GM12878 (cell line): ENCODE measurements at regions of chr11 and their contacts with region 1.

Region 1: DNA sequence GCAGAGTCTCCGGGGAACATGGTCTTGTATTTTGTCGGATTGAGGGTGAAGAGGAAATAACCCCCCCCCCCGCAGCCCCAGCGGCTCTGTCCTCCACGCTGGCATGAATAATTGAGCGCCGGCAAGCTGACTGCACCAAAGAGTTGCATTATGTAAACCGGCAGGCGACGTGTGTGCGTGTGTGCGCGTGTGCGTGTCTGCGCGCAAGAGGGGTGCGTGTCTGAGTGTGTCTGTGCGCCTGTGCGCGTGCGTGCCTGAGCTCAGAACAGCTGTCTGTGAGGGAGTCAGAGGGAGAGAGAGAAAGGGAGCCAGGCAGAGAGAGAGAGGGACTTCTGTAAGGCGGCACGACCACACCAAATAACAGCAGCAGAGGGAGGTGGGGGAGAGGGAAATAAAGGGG is 94.4 kb downstream of the SCN3B start:
- DNase-seq: no peak
- ATAC-seq: peak; percentile 73
- H3K4me3 ChIP-seq: peak overlapping the region; percentile 15; the same call in 1 of the 2 replicates
- H3K27ac ChIP-seq: no peak overlapping the region
- H3K4me1 ChIP-seq: peaks cover 14% of the 10 kb centered on the region
- H3K27me3 ChIP-seq: no peaks in the 10 kb centered on the region
- CTCF ChIP-seq: no peak
- EP300 ChIP-seq: no peak
- POLR2A ChIP-seq: peak; percentile 44; the same call in 1 of the 2 replicates
- RAD21 ChIP-seq: no peak

Region 2: DNA sequence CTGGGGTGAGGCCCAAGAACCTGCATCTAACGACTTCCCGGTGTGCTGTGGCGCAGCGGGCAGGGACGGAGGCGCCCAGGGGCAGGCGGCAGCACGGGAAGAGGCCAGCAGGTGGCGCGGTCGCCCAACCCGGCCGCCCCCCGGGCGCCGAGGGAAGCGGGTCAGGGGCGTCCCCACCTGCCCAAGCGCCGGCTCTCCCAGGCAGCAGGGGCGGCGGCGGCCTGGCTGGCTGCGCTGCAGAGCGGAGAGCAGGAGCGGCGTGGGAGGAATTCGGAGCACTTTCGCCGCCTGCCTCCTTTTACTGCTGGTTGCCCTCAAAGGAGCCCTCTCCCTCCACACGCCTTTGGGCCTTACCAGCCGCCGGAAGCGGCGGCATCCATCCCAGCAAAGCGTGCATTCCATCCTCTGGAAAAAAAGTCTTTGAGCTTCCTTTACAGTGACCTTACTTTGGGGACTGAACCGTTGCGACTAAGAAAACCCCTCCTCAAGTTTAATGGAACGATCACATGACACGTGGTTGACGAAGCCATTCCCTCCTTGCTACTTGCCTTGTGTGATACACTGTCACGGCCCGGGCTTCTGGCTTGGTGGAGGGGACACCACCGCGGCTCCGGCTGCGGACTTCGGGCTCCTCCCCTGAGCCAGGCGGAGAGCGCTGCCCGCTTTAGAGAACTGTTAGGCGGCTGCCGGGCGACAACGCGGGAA is 258.2 kb before region 1 on chr11:
- CTCF ChIA-PET with region 1: interaction called, 3 read pairs
- POLR2A ChIA-PET with region 1: no interaction called
- RAD21 ChIA-PET with region 1: no interaction called
- SMC1A ChIA-PET with region 1: interaction called, 3 read pairs
- in situ Hi-C with region 1: no loop called
- intact Hi-C with region 1: loop called (anchors 5 kb)
- DNase-seq: peak; percentile 32
- ATAC-seq: peak; percentile 83
- H3K4me3 ChIP-seq: peak overlapping the region; percentile 62; the same call in 1 of the 2 replicates
- H3K27ac ChIP-seq: peak overlapping the region; percentile 75
- H3K4me1 ChIP-seq: peaks cover 29% of the 10 kb centered on the region
- H3K27me3 ChIP-seq: no peaks in the 10 kb centered on the region
- CTCF ChIP-seq: peak; percentile 76 to 93 (median 84); a peak in 5 of 6 replicates
- EP300 ChIP-seq: no peak
- POLR2A ChIP-seq: no peak; the same call in 1 of the 2 replicates
- RAD21 ChIP-seq: peak; percentile 86

Region 3: DNA sequence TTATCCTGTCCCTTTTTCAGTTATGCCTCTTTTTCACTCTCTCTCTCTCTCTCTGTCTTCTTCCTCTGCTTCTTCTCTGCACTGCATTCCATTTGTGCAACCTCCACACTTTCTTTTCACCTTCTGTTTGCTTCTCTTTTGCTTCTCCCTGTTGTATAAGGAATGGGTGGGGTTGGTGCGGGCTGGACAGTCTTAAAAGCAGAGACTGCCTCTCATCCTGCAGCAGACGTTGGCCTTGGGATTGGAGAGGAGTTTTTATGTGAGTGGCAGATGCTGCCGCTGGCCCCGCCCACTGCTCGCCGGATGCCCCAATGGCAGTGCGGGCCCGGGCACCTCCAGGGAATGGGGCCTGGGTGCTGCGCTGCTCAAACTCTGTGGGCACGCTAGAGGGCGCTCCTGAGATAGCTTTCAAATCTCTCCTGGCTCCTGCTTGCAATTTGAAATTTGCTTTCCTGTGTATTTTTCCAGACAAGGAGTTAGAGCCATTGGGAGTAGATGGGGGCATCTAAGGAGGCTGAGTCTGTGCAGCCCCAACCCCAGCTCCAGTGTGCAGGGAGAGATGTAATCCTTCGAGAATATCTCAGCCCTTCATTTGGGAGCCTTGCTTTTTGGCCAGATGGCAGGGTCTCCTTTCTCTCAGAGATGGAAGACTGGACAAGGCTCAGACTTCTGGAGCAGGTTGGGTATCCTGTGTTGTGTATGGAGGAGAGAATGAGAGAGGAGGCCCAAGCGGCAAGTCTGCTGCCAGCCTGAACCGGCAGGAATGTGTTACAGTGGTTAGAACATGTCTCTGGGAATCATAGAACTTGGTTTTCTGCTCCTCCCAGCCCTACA is 48.8 kb before region 1 on chr11:
- CTCF ChIA-PET with region 1: interaction called, 50 read pairs
- POLR2A ChIA-PET with region 1: no interaction called
- RAD21 ChIA-PET with region 1: interaction called, 3 read pairs
- SMC1A ChIA-PET with region 1: interaction called, 64 read pairs
- in situ Hi-C with region 1: no loop called
- intact Hi-C with region 1: loop called (anchors 1 kb)
- DNase-seq: no peak
- ATAC-seq: peak; percentile 99
- H3K4me3 ChIP-seq: no peak overlapping the region
- H3K27ac ChIP-seq: no peak overlapping the region
- H3K4me1 ChIP-seq: peaks cover 13% of the 10 kb centered on the region
- H3K27me3 ChIP-seq: no peaks in the 10 kb centered on the region
- CTCF ChIP-seq: peak; percentile 85 to 90 (median 89)
- EP300 ChIP-seq: no peak
- POLR2A ChIP-seq: no peak
- RAD21 ChIP-seq: peak; percentile 78

Region 4: DNA sequence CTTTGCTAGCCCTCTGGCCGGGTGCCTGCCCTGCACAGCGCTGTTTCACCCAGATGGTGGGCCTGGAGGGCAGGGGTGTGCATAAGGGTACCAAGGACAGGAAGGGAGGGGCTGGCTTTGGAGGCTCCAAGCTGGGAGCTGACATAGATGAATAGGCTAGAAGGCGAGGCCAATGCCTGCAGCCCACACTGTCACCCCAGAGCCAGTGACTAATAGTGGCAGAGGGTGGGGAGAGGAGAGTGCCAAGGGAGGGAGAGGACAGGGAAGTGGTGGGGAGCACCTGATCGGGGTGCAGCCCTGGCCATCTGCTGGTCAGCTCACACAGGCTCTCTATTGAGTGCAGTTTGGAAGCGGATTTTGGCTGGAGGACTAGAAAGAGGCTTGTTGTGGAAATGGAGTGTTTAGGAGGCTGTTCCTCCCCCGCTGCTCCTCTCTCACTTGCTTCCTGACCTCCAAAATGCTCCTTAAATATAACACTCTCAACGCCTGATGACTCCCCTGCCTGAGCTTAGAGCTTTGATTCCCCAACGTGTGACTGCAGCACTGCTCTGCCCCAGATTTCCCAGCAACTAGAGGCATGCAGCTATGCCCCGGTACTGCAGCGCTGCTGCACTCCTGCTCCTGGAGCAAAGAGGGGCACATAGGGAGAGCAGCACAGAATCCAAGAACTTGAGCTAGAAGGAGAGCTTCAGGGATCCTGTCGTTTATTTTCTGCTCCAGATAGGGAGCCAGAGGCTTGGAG is 40.8 kb before region 1 on chr11:
- CTCF ChIA-PET with region 1: interaction called, 48 read pairs
- POLR2A ChIA-PET with region 1: no interaction called
- RAD21 ChIA-PET with region 1: interaction called, 4 read pairs
- SMC1A ChIA-PET with region 1: interaction called, 64 read pairs
- in situ Hi-C with region 1: no loop called
- intact Hi-C with region 1: no loop called
- DNase-seq: no peak
- ATAC-seq: peak; percentile 18
- H3K4me3 ChIP-seq: no peak overlapping the region
- H3K27ac ChIP-seq: no peak overlapping the region
- H3K4me1 ChIP-seq: peaks cover 25% of the 10 kb centered on the region
- H3K27me3 ChIP-seq: no peaks in the 10 kb centered on the region
- CTCF ChIP-seq: no peak
- EP300 ChIP-seq: no peak
- POLR2A ChIP-seq: no peak
- RAD21 ChIP-seq: no peak

Region 5: DNA sequence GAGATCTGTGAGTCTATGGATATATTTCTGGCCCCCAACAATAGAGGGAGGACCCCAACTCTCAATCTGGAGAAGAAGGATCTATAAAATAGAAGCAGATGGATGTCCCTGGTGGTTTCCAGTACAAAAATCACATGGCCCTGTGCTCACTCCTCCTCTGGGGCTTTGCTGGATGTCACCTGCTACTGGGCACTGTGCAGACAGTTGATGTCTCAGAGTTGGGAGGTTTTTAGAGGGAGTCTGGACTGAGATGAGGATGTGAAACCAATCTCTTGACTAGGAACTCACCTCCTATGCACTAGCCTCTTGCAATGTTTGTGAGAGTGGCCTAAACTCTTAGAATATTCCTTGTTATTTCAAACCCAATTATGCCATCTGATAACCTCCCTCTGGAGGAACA is 12.8 kb before region 1 on chr11:
- CTCF ChIA-PET with region 1: interaction called, 26 read pairs
- POLR2A ChIA-PET with region 1: interaction called, 3 read pairs
- RAD21 ChIA-PET with region 1: interaction called, 7 read pairs
- SMC1A ChIA-PET with region 1: interaction called, 5 read pairs
- in situ Hi-C with region 1: no loop called
- intact Hi-C with region 1: no loop called
- DNase-seq: peak; percentile 34
- ATAC-seq: peak; percentile 96
- H3K4me3 ChIP-seq: no peak overlapping the region
- H3K27ac ChIP-seq: no peak overlapping the region
- H3K4me1 ChIP-seq: peaks cover 23% of the 10 kb centered on the region
- H3K27me3 ChIP-seq: no peaks in the 10 kb centered on the region
- CTCF ChIP-seq: no peak
- EP300 ChIP-seq: no peak; a peak in 1 of 4 replicates
- POLR2A ChIP-seq: no peak
- RAD21 ChIP-seq: no peak

Region 6: GRCh38 chr11:123741159-123742028 is 181.4 kb after region 1 on chr11 and contains the start of gene ZNF202:
- CTCF ChIA-PET with region 1: no interaction called
- POLR2A ChIA-PET with region 1: no interaction called
- RAD21 ChIA-PET with region 1: no interaction called
- SMC1A ChIA-PET with region 1: no interaction called
- in situ Hi-C with region 1: no loop called
- intact Hi-C with region 1: no loop called
- DNase-seq: peak; percentile 57
- ATAC-seq: peak; percentile 96
- H3K4me3 ChIP-seq: peak within 1 kb of the TSS; percentile 86
- H3K27ac ChIP-seq: peak within 1 kb of the TSS; percentile 43
- H3K4me1 ChIP-seq: peaks cover 3% of the 10 kb centered on the region; the same call in 1 of the 2 replicates
- H3K27me3 ChIP-seq: no peaks in the 10 kb centered on the region
- CTCF ChIP-seq: no peak
- EP300 ChIP-seq: no peak
- POLR2A ChIP-seq: peak; percentile 87
- RAD21 ChIP-seq: no peak
- polyA plus RNA-seq, gene ZNF202: 2.6 to 2.8 TPM